ENCODE measurements at regions of chr17 and their contacts with region 1.

Region 1: DNA sequence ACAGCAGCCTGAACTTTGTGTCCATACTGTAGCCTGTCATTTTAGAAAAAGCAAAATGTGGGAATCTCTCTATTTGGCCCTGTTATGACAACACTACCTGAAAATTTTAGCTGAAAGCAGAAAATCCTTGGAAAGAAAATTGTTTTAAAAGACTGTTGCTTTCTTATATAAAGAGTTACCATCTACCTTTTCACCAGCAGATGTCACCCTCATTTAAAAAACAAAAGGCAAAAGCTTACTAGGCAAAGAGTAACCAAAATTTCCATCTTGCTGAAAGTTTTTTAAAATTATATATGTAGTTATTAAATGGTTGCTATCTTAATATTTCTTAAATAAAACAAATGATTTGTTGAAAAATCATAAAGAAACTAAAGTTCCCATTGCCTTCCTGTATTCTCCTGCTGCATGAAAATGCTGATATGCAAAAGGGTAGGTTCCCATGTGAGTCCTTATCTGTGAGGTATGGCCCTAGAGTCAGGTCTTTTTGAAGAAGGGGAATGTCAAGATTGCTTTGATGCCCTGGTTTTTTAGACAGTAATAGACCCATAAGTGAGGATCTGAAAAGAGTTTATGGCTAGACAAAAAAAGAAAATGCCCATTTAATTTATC is 61.0 kb downstream of the TNRC6C start:
- DNase-seq: no peak
- H3K4me3 Mint-ChIP-seq: no peak overlapping the region
- H3K27ac Mint-ChIP-seq: no peak overlapping the region
- H3K4me1 Mint-ChIP-seq: peaks cover 28% of the 10 kb centered on the region
- H3K27me3 Mint-ChIP-seq: no peaks in the 10 kb centered on the region

Region 2: DNA sequence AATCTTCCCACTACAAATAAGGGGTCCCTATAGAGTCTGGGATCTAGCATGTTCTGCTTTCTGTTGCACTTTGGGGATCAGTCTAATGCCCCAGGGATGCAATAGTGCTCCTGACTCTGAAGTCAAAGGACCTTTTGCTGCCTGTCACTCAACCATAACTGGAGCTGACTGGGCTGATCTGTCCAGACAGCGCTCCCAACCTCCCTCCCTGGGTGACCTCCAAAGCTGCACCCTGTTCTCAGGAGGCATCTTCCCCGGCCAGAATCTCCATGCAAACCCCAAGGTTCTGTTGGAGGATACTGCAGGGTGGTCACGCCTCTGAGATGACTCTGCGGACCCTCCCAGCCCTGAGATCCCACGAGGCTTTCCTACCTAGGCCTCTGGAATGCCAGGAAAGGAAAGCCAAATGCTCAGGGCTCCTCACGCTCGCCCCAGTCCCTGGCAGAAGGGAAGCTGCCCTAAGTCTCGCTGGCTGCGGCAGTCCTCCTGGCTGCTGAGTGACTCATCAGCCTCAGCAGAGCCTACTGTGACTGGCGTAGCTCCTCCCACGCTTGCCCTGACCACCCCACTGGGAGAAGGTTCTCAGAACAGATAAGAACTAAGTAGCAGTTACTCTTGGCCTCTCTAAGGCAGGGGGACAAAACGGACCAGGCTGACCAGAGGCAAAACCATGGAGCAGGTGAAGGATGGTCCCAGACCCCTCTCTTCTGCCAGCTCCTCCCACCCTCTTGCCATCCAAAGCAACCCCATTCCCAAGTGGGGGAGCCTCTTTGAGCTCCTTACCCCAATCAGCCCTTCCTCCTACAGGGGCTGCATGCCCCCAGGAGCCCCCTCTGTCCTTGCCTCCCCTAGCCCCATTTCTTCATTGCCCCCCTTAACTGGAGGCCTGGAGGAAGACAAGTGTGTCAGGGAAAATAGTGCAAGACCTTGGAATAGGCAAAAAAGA is 185.0 kb before region 1 on chr17:
- CTCF ChIA-PET with region 1: no interaction called
- POLR2A ChIA-PET with region 1: no interaction called
- intact Hi-C with region 1: no loop called
- DNase-seq: peak; percentile 89
- H3K4me3 Mint-ChIP-seq: no peak overlapping the region
- H3K27ac Mint-ChIP-seq: peak overlapping the region; percentile 43
- H3K4me1 Mint-ChIP-seq: peaks cover 59% of the 10 kb centered on the region
- H3K27me3 Mint-ChIP-seq: peaks cover 14% of the 10 kb centered on the region

Region 3: GRCh38 chr17:77999413-78000173 is 19.9 kb before region 1 on chr17:
- CTCF ChIA-PET with region 1: interaction called, 42 read pairs
- POLR2A ChIA-PET with region 1: no interaction called
- intact Hi-C with region 1: no loop called
- DNase-seq: peak; percentile 45
- H3K4me3 Mint-ChIP-seq: no peak overlapping the region
- H3K27ac Mint-ChIP-seq: no peak overlapping the region
- H3K4me1 Mint-ChIP-seq: peaks cover 67% of the 10 kb centered on the region
- H3K27me3 Mint-ChIP-seq: no peaks in the 10 kb centered on the region

Region 4: DNA sequence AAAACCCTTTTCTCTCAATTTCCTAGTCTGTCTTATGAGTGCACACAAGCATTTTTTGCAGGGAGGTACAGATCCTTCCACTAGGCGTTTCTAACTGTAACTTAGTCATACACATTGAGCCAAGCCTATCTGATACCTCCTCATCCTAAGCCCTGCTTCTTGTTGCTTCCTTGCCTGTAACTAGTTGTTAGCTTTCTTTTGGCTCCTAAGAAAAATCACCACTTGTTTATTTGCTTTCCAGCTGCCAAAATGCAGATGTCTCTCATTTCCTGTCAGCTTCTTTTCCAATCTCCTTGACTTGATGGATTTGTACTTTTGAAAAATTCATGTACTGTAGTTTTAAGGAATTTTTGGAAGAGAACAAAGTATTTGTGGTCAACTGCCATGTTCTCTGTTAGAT is 12.7 kb after region 1 on chr17:
- CTCF ChIA-PET with region 1: interaction called, 18 read pairs
- POLR2A ChIA-PET with region 1: interaction called, 4 read pairs
- intact Hi-C with region 1: no loop called
- DNase-seq: no peak
- H3K4me3 Mint-ChIP-seq: no peak overlapping the region
- H3K27ac Mint-ChIP-seq: no peak overlapping the region
- H3K4me1 Mint-ChIP-seq: peaks cover 25% of the 10 kb centered on the region
- H3K27me3 Mint-ChIP-seq: no peaks in the 10 kb centered on the region

Region 5: DNA sequence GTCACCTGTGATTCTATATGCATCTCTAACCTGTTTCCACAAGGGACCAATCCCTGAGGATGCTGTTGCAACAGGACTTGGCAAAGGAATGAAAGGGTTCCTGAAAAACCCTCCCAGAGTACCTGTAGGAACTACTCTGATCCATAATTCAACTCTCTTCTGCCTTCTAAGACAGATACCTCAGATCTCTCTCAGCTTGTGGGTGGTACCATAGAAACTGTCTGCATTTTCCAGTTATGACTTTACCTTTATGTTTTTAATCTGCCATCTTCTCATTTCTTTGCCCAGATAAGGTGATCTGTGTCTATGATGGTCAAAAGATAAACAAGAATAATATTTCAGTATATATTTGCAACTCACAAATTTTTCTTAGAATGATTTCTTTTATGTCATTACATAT is 44.0 kb after region 1 on chr17:
- CTCF ChIA-PET with region 1: interaction called, 6 read pairs
- POLR2A ChIA-PET with region 1: no interaction called
- intact Hi-C with region 1: loop called (anchors 5 kb)
- DNase-seq: no peak
- H3K4me3 Mint-ChIP-seq: no peak overlapping the region
- H3K27ac Mint-ChIP-seq: no peak overlapping the region
- H3K4me1 Mint-ChIP-seq: peaks cover 23% of the 10 kb centered on the region
- H3K27me3 Mint-ChIP-seq: no peaks in the 10 kb centered on the region

Region 6: GRCh38 chr17:78133971-78134898 is 114.8 kb after region 1 on chr17:
- CTCF ChIA-PET with region 1: interaction called, 14 read pairs
- POLR2A ChIA-PET with region 1: no interaction called
- intact Hi-C with region 1: no loop called
- DNase-seq: peak; percentile 87
- H3K4me3 Mint-ChIP-seq: peak overlapping the region; percentile 65
- H3K27ac Mint-ChIP-seq: peak overlapping the region; percentile 54
- H3K4me1 Mint-ChIP-seq: peaks cover 70% of the 10 kb centered on the region
- H3K27me3 Mint-ChIP-seq: no peaks in the 10 kb centered on the region

Region 7: GRCh38 chr17:78250891-78251794 is 231.7 kb after region 1 on chr17:
- CTCF ChIA-PET with region 1: interaction called, 24 read pairs
- POLR2A ChIA-PET with region 1: no interaction called
- intact Hi-C with region 1: no loop called
- DNase-seq: peak; percentile 92
- H3K4me3 Mint-ChIP-seq: peak overlapping the region; percentile 44
- H3K27ac Mint-ChIP-seq: peak overlapping the region; percentile 9
- H3K4me1 Mint-ChIP-seq: peaks cover 31% of the 10 kb centered on the region
- H3K27me3 Mint-ChIP-seq: no peaks in the 10 kb centered on the region